WTC11 (cell line): ENCODE measurements at regions of chr10 and their contacts with region 1.

Region 1: GRCh38 chr10:20369863-20370736 is 527.0 kb downstream of the NEBL start:
- DNase-seq: peak; percentile 77
- ATAC-seq: peak; percentile 86
- H3K4me3 Mint-ChIP-seq: peak overlapping the region; percentile 66
- H3K27ac Mint-ChIP-seq: peak overlapping the region; percentile 99
- H3K4me1 Mint-ChIP-seq: peaks cover 68% of the 10 kb centered on the region
- H3K27me3 Mint-ChIP-seq: no peaks in the 10 kb centered on the region
- CTCF ChIP-seq: no peak

Region 2: DNA sequence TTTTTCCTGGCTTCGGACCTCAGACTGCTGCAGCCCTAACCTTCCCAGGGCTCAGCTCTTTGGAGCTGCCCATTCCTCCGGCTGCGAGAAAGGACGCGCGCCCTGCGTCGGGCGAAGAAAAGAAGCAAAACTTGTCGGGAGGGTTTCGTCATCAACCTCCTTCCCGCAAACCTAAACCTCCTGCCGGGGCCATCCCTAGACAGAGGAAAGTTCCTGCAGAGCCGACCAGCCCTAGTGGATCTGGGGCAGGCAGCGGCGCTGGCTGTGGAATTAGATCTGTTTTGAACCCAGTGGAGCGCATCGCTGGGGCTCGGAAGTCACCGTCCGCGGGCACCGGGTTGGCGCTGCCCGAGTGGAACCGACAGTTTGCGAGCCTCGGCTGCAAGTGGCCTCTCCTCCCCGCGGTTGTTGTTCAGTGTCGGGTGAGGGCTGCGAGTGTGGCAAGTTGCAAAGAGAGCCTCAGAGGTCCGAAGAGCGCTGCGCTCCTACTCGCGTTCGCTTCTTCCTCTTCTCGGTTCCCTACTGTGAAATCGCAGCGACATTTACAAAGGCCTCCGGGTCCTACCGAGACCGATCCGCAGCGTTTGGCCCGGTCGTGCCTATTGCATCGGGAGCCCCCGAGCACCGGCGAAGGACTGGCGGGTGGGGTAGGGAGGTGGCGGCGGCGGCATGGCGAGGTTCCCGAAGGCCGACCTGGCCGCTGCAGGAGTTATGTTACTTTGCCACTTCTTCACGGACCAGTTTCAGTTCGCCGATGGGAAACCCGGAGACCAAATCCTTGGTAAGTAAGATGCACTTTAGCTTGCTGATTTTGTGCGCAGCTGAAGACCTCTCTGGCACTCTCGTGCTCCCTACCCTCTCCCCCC is 553.5 kb before region 1 on chr10 and contains the start of gene PLXDC2:
- CTCF ChIA-PET with region 1: interaction called, 3 read pairs
- POLR2A ChIA-PET with region 1: interaction called, 10 read pairs
- DNase-seq: peak; percentile 55
- ATAC-seq: no peak; the same call in none of the 2 replicates
- H3K4me3 Mint-ChIP-seq: peak within 1 kb of the TSS; percentile 95
- H3K27ac Mint-ChIP-seq: peak within 1 kb of the TSS; percentile 98
- H3K4me1 Mint-ChIP-seq: peaks cover 45% of the 10 kb centered on the region
- H3K27me3 Mint-ChIP-seq: no peaks in the 10 kb centered on the region; the same call in 1 of the 2 replicates
- CTCF ChIP-seq: no peak
- total RNA-seq, gene PLXDC2: 31.7 to 37.9 TPM (median 37.8 TPM) in 3 replicates

Region 3: GRCh38 chr10:20381761-20382160 is 11.7 kb after region 1 on chr10:
- CTCF ChIA-PET with region 1: no interaction called
- POLR2A ChIA-PET with region 1: no interaction called
- DNase-seq: no peak
- ATAC-seq: no peak
- H3K4me3 Mint-ChIP-seq: no peak overlapping the region
- H3K27ac Mint-ChIP-seq: no peak overlapping the region
- H3K4me1 Mint-ChIP-seq: peaks cover 12% of the 10 kb centered on the region
- H3K27me3 Mint-ChIP-seq: no peaks in the 10 kb centered on the region
- CTCF ChIP-seq: no peak

Region 4: DNA sequence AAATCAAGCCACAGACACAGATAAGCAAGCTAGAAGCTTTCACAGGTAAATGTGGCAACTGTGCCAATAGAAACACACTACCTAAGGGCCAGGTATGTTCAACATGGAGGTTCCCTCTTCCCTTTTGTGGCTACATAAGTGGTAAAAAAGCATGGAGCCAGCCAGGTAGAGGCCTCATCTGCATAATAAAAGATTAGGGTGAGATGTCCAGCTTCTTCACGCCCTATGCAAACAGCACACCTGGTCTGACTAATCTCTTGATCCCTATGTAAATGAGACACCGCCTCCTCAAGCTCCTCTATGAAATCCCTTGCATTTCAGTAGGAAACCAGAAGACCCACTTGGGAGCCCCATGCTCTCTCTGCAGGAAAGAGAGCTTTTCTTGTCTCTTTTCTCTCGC is 244.8 kb after region 1 on chr10:
- CTCF ChIA-PET with region 1: interaction called, 3 read pairs
- POLR2A ChIA-PET with region 1: interaction called, 11 read pairs
- DNase-seq: peak; percentile 23
- ATAC-seq: peak; percentile 97
- H3K4me3 Mint-ChIP-seq: peak overlapping the region; percentile 13; the same call in 1 of the 2 replicates
- H3K27ac Mint-ChIP-seq: peak overlapping the region; percentile 97
- H3K4me1 Mint-ChIP-seq: peaks cover 33% of the 10 kb centered on the region
- H3K27me3 Mint-ChIP-seq: no peaks in the 10 kb centered on the region
- CTCF ChIP-seq: no peak